GM12878 (cell line): ENCODE measurements at regions of chr11 and their contacts with region 1.

Region 1: GRCh38 chr11:58900479-58901420 is 38.5 kb upstream of the GLYATL1 start:
- DNase-seq: peak; percentile 16
- ATAC-seq: peak; percentile 90
- H3K4me3 ChIP-seq: no peak overlapping the region
- H3K27ac ChIP-seq: no peak overlapping the region
- H3K4me1 ChIP-seq: no peaks in the 10 kb centered on the region
- H3K27me3 ChIP-seq: peaks cover 1 to 7% of the 10 kb centered on the region in 2 experiments
- CTCF ChIP-seq: peak; percentile 51 to 66 (median 62); a peak in 5 of 6 replicates
- EP300 ChIP-seq: no peak
- POLR2A ChIP-seq: no peak
- RAD21 ChIP-seq: peak; percentile 52; the same call in 1 of the 2 replicates

Region 2: GRCh38 chr11:58654079-58654907 is 246.5 kb before region 1 on chr11:
- CTCF ChIA-PET with region 1: interaction called, 6 read pairs
- POLR2A ChIA-PET with region 1: no interaction called
- RAD21 ChIA-PET with region 1: no interaction called
- SMC1A ChIA-PET with region 1: interaction called, 3 read pairs
- in situ Hi-C with region 1: no loop called
- intact Hi-C with region 1: loop called (anchors 1 kb)
- DNase-seq: peak; percentile 38
- ATAC-seq: peak; percentile 98
- H3K4me3 ChIP-seq: no peak overlapping the region
- H3K27ac ChIP-seq: no peak overlapping the region
- H3K4me1 ChIP-seq: peaks cover 4% of the 10 kb centered on the region; the same call in 1 of the 2 replicates
- H3K27me3 ChIP-seq: no peaks in the 10 kb centered on the region
- CTCF ChIP-seq: peak; percentile 89 to 90 (median 89)
- EP300 ChIP-seq: no peak
- POLR2A ChIP-seq: no peak
- RAD21 ChIP-seq: peak; percentile 76

Region 3: GRCh38 chr11:58813693-58814092 is 87.1 kb before region 1 on chr11:
- CTCF ChIA-PET with region 1: no interaction called
- POLR2A ChIA-PET with region 1: no interaction called
- RAD21 ChIA-PET with region 1: no interaction called
- SMC1A ChIA-PET with region 1: no interaction called
- in situ Hi-C with region 1: no loop called
- intact Hi-C with region 1: no loop called
- DNase-seq: no peak
- ATAC-seq: no peak
- H3K4me3 ChIP-seq: no peak overlapping the region
- H3K27ac ChIP-seq: no peak overlapping the region
- H3K4me1 ChIP-seq: no peaks in the 10 kb centered on the region
- H3K27me3 ChIP-seq: no peaks in the 10 kb centered on the region
- CTCF ChIP-seq: no peak
- EP300 ChIP-seq: no peak
- POLR2A ChIP-seq: no peak
- RAD21 ChIP-seq: no peak

Region 4: GRCh38 chr11:58866788-58867187 is 34.0 kb before region 1 on chr11:
- CTCF ChIA-PET with region 1: no interaction called
- POLR2A ChIA-PET with region 1: no interaction called
- RAD21 ChIA-PET with region 1: no interaction called
- SMC1A ChIA-PET with region 1: no interaction called
- in situ Hi-C with region 1: no loop called
- intact Hi-C with region 1: no loop called
- DNase-seq: no peak
- ATAC-seq: no peak
- H3K4me3 ChIP-seq: no peak overlapping the region
- H3K27ac ChIP-seq: no peak overlapping the region
- H3K4me1 ChIP-seq: no peaks in the 10 kb centered on the region
- H3K27me3 ChIP-seq: no peaks in the 10 kb centered on the region
- CTCF ChIP-seq: no peak
- EP300 ChIP-seq: no peak
- POLR2A ChIP-seq: no peak
- RAD21 ChIP-seq: no peak

Region 5: DNA sequence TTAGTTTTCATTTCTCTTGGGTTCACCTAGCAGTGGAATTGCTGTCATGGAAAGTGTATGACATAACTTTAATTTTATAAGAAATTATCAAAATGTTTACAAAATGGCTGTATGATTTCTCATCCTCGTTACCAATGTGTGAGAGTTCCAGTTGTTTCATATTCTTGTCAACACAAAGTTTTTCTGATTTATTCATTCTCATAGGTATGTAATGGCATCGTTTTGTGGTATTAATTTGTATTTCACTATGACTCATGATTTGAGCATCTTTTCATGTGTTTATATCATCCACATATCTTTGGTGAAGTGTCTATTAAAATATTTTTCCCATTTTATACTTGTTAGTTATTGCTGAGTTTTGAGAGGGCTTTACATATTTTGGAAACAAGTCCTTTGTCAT is 211.7 kb after region 1 on chr11:
- CTCF ChIA-PET with region 1: no interaction called
- POLR2A ChIA-PET with region 1: no interaction called
- RAD21 ChIA-PET with region 1: no interaction called
- SMC1A ChIA-PET with region 1: no interaction called
- in situ Hi-C with region 1: no loop called
- intact Hi-C with region 1: no loop called
- DNase-seq: no peak
- ATAC-seq: no peak
- H3K4me3 ChIP-seq: no peak overlapping the region
- H3K27ac ChIP-seq: no peak overlapping the region
- H3K4me1 ChIP-seq: no peaks in the 10 kb centered on the region
- H3K27me3 ChIP-seq: no peaks in the 10 kb centered on the region
- CTCF ChIP-seq: no peak
- EP300 ChIP-seq: no peak
- POLR2A ChIP-seq: no peak
- RAD21 ChIP-seq: no peak

Region 6: DNA sequence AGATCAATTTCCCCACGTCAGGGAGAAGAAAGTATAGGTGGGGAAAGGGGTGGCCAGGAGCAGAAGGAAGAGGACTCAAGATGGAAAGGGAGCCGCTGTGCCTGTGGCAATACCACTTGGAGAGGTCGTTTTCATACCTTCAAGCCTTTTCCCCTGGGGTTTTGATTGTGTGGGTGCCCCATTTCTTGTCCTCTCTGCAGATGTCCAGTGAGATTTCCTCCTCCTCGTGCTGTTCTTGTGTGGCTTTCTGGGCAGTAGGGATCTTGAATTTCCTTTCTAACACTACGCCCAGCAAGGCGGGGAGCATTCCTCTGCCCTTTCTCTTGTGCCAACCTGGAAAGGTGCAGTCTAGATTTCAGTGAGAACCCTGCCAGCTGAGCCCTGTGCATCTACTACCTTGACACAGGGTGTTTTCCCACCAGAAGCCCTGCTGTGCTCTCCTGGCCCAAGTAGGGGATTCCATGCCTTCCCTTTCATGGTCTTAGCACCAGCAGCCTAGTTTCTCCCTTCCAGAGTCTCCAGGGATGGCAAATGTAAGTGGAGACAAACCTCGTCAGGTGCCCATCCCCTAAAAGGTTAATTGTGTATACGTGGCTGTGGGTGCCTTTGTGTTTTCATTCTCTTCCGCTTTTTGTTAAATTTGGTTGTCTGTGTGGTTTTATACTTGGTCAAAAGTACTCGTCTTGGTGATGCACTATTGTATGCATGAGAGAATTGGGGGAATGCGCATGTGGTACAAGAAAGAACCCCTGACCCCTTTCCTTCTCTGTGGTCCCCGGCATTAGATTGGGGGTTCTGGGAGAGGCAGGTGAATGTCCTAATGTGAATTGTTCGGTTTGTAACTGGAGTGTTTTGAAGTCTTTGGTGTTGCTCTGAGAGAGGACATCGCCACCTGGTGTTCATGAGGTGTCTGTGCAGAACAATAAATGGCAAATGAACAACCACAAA is 383.3 kb after region 1 on chr11:
- CTCF ChIA-PET with region 1: no interaction called
- POLR2A ChIA-PET with region 1: no interaction called
- RAD21 ChIA-PET with region 1: no interaction called
- SMC1A ChIA-PET with region 1: no interaction called
- in situ Hi-C with region 1: no loop called
- intact Hi-C with region 1: no loop called
- DNase-seq: peak; percentile 71
- ATAC-seq: peak; percentile 86
- H3K4me3 ChIP-seq: peak overlapping the region; percentile 37
- H3K27ac ChIP-seq: peak overlapping the region; percentile 63
- H3K4me1 ChIP-seq: peaks cover 18% of the 10 kb centered on the region
- H3K27me3 ChIP-seq: no peaks in the 10 kb centered on the region
- CTCF ChIP-seq: peak; percentile 81 to 83 (median 82)
- EP300 ChIP-seq: 0 out of 4 replicates have a peak, but pooled peaks of 1 of the 2 experiments have one; percentile 26
- POLR2A ChIP-seq: no peak
- RAD21 ChIP-seq: peak; percentile 84